Adrenal gland (tissue), 19 donors: ENCODE measurements at regions of chr1 and their contacts with region 1.

Region 1: DNA sequence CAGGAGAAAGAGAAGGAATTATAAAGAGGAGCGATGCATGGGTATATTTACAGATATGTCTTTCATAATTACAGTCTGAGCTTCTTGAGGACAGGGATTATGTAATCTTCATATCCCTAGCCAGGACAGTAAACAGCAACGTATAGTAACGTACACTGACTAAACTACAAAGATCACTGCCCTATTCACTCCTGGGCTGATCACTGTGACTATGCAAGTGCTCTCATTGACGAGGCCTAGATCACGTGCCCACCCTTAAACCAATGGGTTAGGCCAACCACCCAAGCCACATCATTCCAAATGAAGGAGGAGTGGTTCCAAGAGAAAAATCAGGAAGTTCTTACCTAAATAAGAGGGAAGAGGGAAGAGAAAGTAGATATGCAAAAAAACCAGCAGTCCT is 18.5 kb downstream of the PIK3R3 start:
- DNase-seq: no peak
- H3K4me3 ChIP-seq: no peak overlapping the region
- H3K27ac ChIP-seq: no peak overlapping the region
- H3K4me1 ChIP-seq: peaks cover 0 to 10% of the 10 kb centered on the region in 2 donors
- H3K27me3 ChIP-seq: no peaks in the 10 kb centered on the region
- CTCF ChIP-seq: no peak
- POLR2A ChIP-seq: no peak

Region 2: GRCh38 chr1:45876000-45876617 is 237.8 kb before region 1 on chr1:
- intact Hi-C with region 1: no loop called
- DNase-seq: no peak
- H3K4me3 ChIP-seq: no peak overlapping the region
- H3K27ac ChIP-seq: no peak overlapping the region
- H3K4me1 ChIP-seq: no peaks in the 10 kb centered on the region
- H3K27me3 ChIP-seq: no peaks in the 10 kb centered on the region
- CTCF ChIP-seq: no peak
- POLR2A ChIP-seq: no peak

Region 3: GRCh38 chr1:46001081-46001785 is 112.7 kb before region 1 on chr1:
- intact Hi-C with region 1: no loop called
- DNase-seq: no peak
- H3K4me3 ChIP-seq: no peak overlapping the region
- H3K27ac ChIP-seq: no peak overlapping the region
- H3K4me1 ChIP-seq: no peaks in the 10 kb centered on the region
- H3K27me3 ChIP-seq: no peaks in the 10 kb centered on the region
- CTCF ChIP-seq: no peak
- POLR2A ChIP-seq: no peak

Region 4: DNA sequence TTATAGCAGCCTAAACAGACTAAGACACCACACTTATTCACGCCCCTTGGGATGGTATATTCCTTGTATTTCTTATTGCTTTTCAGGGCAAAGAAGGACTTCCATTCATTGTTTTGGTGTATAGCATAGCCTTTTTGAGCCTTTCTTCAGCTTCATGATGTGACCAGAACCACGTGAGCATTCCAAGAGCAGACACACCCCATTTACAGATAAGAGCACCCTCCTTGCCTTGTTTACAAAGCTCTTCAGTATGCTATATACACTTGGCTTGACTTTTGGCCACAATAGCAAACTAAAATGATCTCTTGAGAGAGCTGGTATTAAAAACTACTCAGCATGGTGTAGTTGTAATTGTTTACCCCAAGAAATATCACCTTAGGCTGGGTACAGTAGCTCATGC is 60.2 kb before region 1 on chr1:
- intact Hi-C with region 1: loop called in 1 of 2 experiments (anchors 10 kb)
- DNase-seq: no peak
- H3K4me3 ChIP-seq: no peak overlapping the region
- H3K27ac ChIP-seq: no peak overlapping the region
- H3K4me1 ChIP-seq: no peaks in the 10 kb centered on the region
- H3K27me3 ChIP-seq: no peaks in the 10 kb centered on the region
- CTCF ChIP-seq: no peak
- POLR2A ChIP-seq: no peak